Mammary epithelial cell (primary cell): ENCODE measurements at regions of chrX and their contacts with region 1.

Region 1: GRCh38 chrX:24647257-24648058 is at the start of gene PCYT1B:
- DNase-seq: peak; percentile 80
- H3K4me3 ChIP-seq: peak within 1 kb of the TSS; percentile 42 to 55 (median 54)
- H3K27ac ChIP-seq: peak within 1 kb of the TSS; percentile 54
- H3K4me1 ChIP-seq: peaks cover 9% of the 10 kb centered on the region
- H3K27me3 ChIP-seq: no peaks in the 10 kb centered on the region
- CTCF ChIP-seq: no peak
- total RNA-seq, gene PCYT1B: 12.1 to 18.3 TPM

Region 2: GRCh38 chrX:24693453-24694202 is 46.2 kb after region 1 on chrX and contains the start of gene POLA1:
- CTCF ChIA-PET with region 1: no interaction called
- dilution Hi-C with region 1: no loop called
- in situ Hi-C with region 1: no loop called
- intact Hi-C with region 1: loop called (anchors 1 kb)
- DNase-seq: peak; percentile 94
- H3K4me3 ChIP-seq: peak within 1 kb of the TSS; percentile 65 to 79 (median 74)
- H3K27ac ChIP-seq: peak within 1 kb of the TSS; percentile 78
- H3K4me1 ChIP-seq: peaks cover 8% of the 10 kb centered on the region
- H3K27me3 ChIP-seq: no peaks in the 10 kb centered on the region
- CTCF ChIP-seq: peak in 1 of 2 donors; percentile 36
- total RNA-seq, gene POLA1: 9.8 to 14.8 TPM

Region 3: GRCh38 chrX:25206778-25207177 is 559.3 kb after region 1 on chrX:
- CTCF ChIA-PET with region 1: no interaction called
- dilution Hi-C with region 1: no loop called
- in situ Hi-C with region 1: no loop called
- intact Hi-C with region 1: no loop called
- DNase-seq: peak; percentile 79
- H3K4me3 ChIP-seq: no peak overlapping the region
- H3K27ac ChIP-seq: no peak overlapping the region
- H3K4me1 ChIP-seq: peaks cover 10% of the 10 kb centered on the region
- H3K27me3 ChIP-seq: no peaks in the 10 kb centered on the region
- CTCF ChIP-seq: peak in 1 of 2 donors; percentile 13